GM13976 (cell line): ENCODE measurements at regions of chr6 and their contacts with region 1.

Region 1: DNA sequence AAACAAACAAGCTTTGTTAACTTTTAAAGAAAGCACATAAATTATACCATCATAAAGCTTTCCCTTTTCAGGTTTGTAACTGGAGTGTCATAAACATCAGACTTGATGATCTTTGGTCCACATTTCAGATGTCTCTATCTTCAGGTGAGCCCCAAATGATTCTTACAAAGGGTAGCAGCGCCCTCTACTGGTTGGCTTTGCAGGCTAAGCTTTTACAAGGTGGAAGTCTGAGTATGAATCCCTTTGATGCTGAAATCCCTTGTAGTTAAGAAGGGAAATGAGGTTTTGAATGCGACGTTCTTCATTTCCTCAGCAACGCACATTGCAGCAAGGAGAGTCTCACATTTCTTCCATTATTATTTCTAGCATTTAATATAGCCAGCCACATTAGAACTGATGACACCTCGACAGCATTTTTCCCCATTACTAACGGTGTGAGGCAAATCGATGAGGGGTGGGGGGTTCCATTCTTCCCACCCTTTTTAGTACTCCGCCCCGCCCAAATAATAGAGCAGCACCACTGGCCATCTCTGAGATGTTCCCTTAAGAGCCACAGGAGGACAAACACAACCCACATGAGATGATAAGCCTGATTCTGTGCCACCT is 126.3 kb upstream of the NT5E start:
- DNase-seq: peak; percentile 49
- CTCF ChIP-seq: peak; percentile 85

Region 2: DNA sequence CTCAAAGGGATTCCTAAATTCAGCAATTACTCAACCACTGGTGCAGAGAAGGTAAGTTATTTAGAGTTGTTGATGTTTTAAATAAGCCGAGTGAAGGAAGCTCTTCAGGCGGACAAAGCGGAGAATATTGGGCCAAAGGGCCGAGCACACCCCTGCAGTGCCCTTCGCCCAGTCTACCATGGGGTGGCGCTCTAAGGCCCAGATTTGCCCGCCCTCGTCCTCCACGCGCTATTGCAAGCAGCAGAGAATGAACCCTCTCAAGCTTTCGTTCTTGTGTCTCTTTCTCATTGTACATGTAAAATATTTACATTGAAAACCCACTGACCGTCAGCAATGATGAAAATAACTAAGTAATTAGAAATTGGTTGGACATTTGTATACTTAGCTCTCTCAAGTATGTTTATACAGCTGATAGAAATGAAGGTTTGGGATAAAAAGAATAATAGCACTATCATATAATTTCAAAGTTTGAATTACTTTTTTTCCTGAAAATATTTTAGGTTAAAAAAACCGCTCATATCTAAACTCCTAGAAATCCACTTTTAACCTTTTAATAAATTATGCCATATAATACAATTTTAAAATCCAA is 901.1 kb before region 1 on chr6:
- in situ Hi-C with region 1: loop called (anchors 25 kb)
- DNase-seq: peak; percentile 26
- CTCF ChIP-seq: peak; percentile 51

Region 3: DNA sequence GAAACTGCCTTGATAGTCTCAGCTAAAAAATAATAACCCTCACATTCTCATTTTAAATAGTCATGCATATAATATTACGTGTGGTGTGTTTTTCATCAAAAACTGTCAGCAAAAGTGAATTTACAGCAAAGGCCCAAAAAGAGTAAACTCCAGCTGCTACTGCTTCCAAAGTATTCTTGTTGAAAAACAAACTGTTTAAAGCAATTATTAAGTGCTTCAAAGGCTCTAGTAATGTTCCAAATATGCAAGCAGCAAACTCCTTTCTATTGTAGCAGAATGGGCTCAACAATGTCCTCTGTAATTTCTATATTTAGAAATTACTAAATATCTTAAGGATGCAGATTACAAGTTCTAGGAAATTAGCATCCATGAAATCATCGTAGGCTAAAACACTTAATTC is 279.2 kb before region 1 on chr6:
- in situ Hi-C with region 1: no loop called
- DNase-seq: no peak
- CTCF ChIP-seq: no peak

Region 4: GRCh38 chr6:85975957-85976356 is 652.4 kb after region 1 on chr6:
- in situ Hi-C with region 1: no loop called
- DNase-seq: peak; percentile 5
- CTCF ChIP-seq: no peak